GM12878 (cell line): ENCODE measurements at regions of chr5 and their contacts with region 1.

Region 1: GRCh38 chr5:130871346-130872086 is 293.5 kb downstream of the HINT1 start:
- DNase-seq: no peak
- ATAC-seq: peak; percentile 86
- H3K4me3 ChIP-seq: no peak overlapping the region
- H3K27ac ChIP-seq: no peak overlapping the region
- H3K4me1 ChIP-seq: no peaks in the 10 kb centered on the region
- H3K27me3 ChIP-seq: no peaks in the 10 kb centered on the region
- CTCF ChIP-seq: peak; percentile 64 to 66 (median 65)
- EP300 ChIP-seq: no peak
- POLR2A ChIP-seq: no peak
- RAD21 ChIP-seq: peak; percentile 63

Region 2: DNA sequence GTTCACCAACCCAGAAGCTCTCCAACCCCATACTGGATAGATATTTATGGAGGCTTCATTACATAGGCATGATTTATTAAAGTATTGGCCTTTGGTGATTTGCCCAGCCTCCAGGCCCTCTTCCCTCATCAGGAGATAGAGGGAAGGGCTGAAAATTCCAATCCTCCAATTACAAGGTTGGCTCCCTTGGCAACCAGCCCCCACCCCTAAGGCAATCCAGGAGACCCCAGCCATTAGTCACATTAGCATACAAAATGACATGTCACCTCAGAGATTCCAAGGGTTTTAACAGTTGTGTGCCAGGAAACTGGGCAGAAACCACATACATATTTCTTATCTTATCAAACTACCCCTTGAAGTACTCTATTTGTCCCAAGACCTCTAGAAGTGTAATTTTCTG is 83.5 kb after region 1 on chr5:
- CTCF ChIA-PET with region 1: no interaction called
- POLR2A ChIA-PET with region 1: no interaction called
- RAD21 ChIA-PET with region 1: no interaction called
- SMC1A ChIA-PET with region 1: no interaction called
- in situ Hi-C with region 1: no loop called
- intact Hi-C with region 1: no loop called
- DNase-seq: no peak
- ATAC-seq: no peak
- H3K4me3 ChIP-seq: no peak overlapping the region
- H3K27ac ChIP-seq: no peak overlapping the region
- H3K4me1 ChIP-seq: no peaks in the 10 kb centered on the region
- H3K27me3 ChIP-seq: no peaks in the 10 kb centered on the region
- CTCF ChIP-seq: no peak
- EP300 ChIP-seq: no peak
- POLR2A ChIP-seq: no peak
- RAD21 ChIP-seq: no peak

Region 3: DNA sequence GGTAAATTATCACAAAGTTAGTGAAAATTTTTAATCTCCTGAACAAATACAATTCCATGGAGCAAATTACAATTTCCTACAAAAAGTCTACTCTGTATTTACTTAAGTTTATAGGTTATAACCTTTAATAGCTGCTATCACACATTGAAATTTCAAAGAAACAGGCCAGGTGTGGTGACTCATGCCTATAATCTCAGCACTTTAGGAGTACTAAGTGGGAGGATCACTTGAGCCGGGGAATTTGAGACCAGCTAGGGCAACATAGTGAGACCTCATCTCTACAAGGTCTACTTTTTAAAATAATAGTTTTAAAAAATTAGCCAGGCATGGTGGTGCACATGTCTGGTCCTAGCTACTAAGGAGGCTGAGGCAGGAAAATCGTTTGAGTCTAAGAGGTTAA is 243.2 kb after region 1 on chr5:
- CTCF ChIA-PET with region 1: interaction called, 25 read pairs
- POLR2A ChIA-PET with region 1: no interaction called
- RAD21 ChIA-PET with region 1: interaction called, 5 read pairs
- SMC1A ChIA-PET with region 1: interaction called, 11 read pairs
- in situ Hi-C with region 1: loop called (anchors 5 kb)
- intact Hi-C with region 1: loop called (anchors 1 kb)
- DNase-seq: no peak
- ATAC-seq: no peak
- H3K4me3 ChIP-seq: no peak overlapping the region
- H3K27ac ChIP-seq: no peak overlapping the region
- H3K4me1 ChIP-seq: no peaks in the 10 kb centered on the region
- H3K27me3 ChIP-seq: no peaks in the 10 kb centered on the region
- CTCF ChIP-seq: no peak
- EP300 ChIP-seq: no peak
- POLR2A ChIP-seq: no peak
- RAD21 ChIP-seq: no peak